ENCODE measurements at regions of chr9 and their contacts with region 1.

Region 1: DNA sequence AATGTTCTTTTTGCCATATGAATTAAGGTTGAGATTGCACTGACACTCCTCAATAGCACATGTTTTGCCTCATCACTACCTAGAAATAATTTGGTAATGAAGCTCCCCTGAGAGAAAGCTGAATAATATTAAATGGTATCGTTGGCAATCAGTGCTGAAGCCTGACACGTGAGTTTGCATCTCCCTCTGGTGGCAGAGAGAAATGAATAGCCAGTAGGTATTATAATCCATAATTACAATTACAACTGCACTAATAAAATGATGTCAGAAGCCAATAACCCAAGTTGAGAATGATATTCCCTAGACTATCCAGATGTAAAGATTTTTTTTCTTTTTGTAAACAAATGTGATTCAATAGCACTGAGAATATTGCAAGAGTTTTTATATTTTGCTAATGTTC is 700.3 kb downstream of the PTPRD start:
- DNase-seq: no peak
- H3K4me3 ChIP-seq: no peak overlapping the region
- H3K27ac ChIP-seq: no peak overlapping the region
- H3K4me1 ChIP-seq: no peaks in the 10 kb centered on the region
- H3K27me3 ChIP-seq: peaks cover 2% of the 10 kb centered on the region
- CTCF ChIP-seq: peak; percentile 54 to 69

Region 2: GRCh38 chr9:9612270-9612669 is 300.2 kb before region 1 on chr9:
- CTCF ChIA-PET with region 1: no interaction called
- dilution Hi-C with region 1: no loop called
- in situ Hi-C with region 1: loop called in 1 of 2 experiments (anchors 25 kb)
- intact Hi-C with region 1: no loop called
- DNase-seq: no peak
- H3K4me3 ChIP-seq: no peak overlapping the region
- H3K27ac ChIP-seq: no peak overlapping the region
- H3K4me1 ChIP-seq: no peaks in the 10 kb centered on the region
- H3K27me3 ChIP-seq: no peaks in the 10 kb centered on the region
- CTCF ChIP-seq: no peak

Region 3: DNA sequence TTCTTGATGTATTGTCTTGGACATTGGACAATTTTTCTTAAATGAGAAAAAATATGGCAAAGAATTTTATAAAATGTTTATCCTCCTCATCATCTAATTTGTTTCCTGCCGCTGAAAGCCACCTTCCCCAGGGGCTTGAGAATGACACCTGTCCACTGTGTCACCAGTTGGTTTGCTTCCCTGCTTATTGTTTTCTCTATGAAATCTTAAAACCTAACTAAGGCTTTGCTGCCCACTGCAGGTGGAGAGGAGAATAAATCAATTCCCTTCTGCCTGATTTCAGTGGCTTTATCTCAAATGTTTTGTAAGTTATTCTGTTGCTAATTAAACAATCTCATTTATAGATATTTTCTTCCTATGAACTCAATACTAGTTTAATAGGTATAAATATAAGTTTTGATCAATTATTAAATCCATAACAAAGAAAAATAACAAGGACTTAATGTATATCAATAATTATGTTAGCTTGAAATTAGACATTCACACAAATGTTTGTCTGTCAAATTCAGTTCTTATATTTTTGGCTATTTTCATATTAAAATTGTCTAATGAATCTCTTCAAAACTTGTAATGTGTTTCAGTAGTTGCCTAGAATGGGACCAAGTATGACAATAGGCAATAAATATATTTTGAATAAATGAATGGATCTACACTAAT is 122.1 kb before region 1 on chr9:
- CTCF ChIA-PET with region 1: no interaction called
- dilution Hi-C with region 1: no loop called
- in situ Hi-C with region 1: no loop called
- intact Hi-C with region 1: loop called (anchors 1 kb)
- DNase-seq: peak; percentile 5
- H3K4me3 ChIP-seq: no peak overlapping the region
- H3K27ac ChIP-seq: no peak overlapping the region
- H3K4me1 ChIP-seq: no peaks in the 10 kb centered on the region
- H3K27me3 ChIP-seq: no peaks in the 10 kb centered on the region
- CTCF ChIP-seq: peak; percentile 70 to 78